HAP-1 (cell line): ENCODE measurements at regions of chr3 and their contacts with region 1.

Region 1: GRCh38 chr3:68876112-68876713 is 56.1 kb downstream of the TAFA4 start:
- DNase-seq: peak; percentile 46 to 48
- H3K4me3 ChIP-seq: no peak overlapping the region
- H3K4me1 ChIP-seq: no peaks in the 10 kb centered on the region
- H3K27me3 ChIP-seq: peaks cover 17% of the 10 kb centered on the region

Region 2: GRCh38 chr3:67113802-67114407 is 1762.3 kb before region 1 on chr3:
- in situ Hi-C with region 1: loop called (anchors 25 kb)
- DNase-seq: peak; percentile 55 to 87
- H3K4me3 ChIP-seq: no peak overlapping the region
- H3K4me1 ChIP-seq: no peaks in the 10 kb centered on the region
- H3K27me3 ChIP-seq: no peaks in the 10 kb centered on the region

Region 3: DNA sequence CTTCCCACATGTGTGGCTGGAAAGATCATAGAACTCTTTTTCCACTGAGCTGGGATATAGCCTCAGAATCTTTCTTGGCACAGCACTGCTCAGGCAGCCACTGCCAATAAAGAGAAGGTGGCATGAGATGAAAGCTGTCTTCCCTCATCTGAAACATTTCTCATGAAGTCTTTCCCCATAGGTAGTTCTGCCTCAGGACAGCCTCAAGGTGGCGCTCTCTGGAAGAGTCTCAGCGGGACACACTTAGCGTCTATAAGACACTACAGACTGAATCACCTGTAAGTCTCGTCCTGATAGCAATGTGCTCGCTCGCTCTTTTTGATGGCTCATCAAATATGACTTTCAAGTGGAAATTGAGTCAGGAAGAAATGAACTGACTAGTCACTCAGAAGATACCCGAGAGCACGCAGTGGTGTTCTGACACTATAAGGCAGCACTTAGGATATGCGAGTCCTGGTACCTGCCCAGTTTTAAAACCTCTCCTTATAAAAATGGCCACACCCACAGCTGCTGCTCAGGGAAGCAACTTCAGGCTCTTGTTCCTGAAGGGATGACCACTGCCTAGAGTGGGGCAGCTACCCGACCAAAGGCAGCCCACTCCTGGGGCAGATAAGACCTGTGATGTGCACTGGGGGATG is 1491.3 kb before region 1 on chr3:
- in situ Hi-C with region 1: loop called (anchors 25 kb)
- DNase-seq: peak; percentile 50 to 80
- H3K4me3 ChIP-seq: no peak overlapping the region
- H3K4me1 ChIP-seq: no peaks in the 10 kb centered on the region
- H3K27me3 ChIP-seq: no peaks in the 10 kb centered on the region

Region 4: GRCh38 chr3:69110941-69111546 is 234.8 kb after region 1 on chr3:
- in situ Hi-C with region 1: no loop called
- DNase-seq: no peak
- H3K4me3 ChIP-seq: no peak overlapping the region
- H3K4me1 ChIP-seq: peaks cover 11% of the 10 kb centered on the region
- H3K27me3 ChIP-seq: no peaks in the 10 kb centered on the region